ENCODE measurements at regions of chr6 and their contacts with region 1.

Region 1: DNA sequence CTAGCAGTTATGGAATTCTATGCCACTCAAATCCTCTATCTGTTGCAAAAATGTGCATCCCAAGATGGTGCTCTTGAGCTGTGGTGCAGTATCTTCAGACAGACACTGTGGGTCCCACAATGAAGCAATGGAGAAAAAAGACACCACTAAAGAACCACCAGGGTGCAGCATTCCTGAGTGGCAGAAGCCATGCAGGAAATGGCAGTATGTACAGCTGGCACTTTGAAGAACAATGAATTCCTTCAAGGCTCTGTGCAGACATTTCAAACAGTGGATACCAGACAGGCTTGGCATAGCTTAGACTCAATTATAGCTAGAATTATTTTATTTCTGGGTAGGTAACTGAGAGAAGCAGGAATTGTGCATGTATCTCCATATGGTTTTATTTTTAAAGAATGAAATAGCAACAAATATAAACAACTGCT is 24.0 kb upstream of the HDAC2 start:
- DNase-seq: peak in 1 of 2 experiments; percentile 51
- H3K4me3 ChIP-seq: no peak overlapping the region
- H3K27ac ChIP-seq: no peak overlapping the region
- H3K4me1 ChIP-seq: peaks cover 0 to 8% (median 5%) of the 10 kb centered on the region in 4 experiments; a peak in 5 of 7 replicates
- H3K27me3 ChIP-seq: no peaks in the 10 kb centered on the region
- CTCF ChIP-seq: peak; percentile 32 to 98 (median 88)
- EP300 ChIP-seq: no peak
- POLR2A ChIP-seq: no peak
- RAD21 ChIP-seq: peak; percentile 96 to 97

Region 2: DNA sequence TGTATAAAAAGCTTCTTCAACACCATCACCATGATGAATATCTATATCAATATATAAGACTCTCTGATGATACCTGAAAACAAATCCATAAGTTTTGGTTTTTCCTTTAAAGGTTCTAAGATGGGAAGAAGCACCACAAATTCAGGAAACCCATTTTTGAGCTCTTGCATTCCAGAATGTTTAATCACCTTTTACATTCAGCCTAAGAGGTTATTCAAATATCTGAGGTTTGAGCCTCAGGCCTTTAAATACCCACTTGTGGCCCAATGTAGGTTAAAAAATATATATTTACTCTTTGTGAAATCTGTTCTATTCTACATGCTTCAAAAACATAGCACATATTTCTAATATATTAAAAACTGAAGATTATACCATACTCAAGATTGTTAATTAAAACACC is 41.6 kb before region 1 on chr6:
- CTCF ChIA-PET with region 1: no interaction called
- POLR2A ChIA-PET with region 1: no interaction called
- DNase-seq: no peak
- H3K4me3 ChIP-seq: no peak overlapping the region
- H3K27ac ChIP-seq: no peak overlapping the region
- H3K4me1 ChIP-seq: no peaks in the 10 kb centered on the region
- H3K27me3 ChIP-seq: no peaks in the 10 kb centered on the region
- CTCF ChIP-seq: no peak
- EP300 ChIP-seq: no peak
- POLR2A ChIP-seq: no peak
- RAD21 ChIP-seq: no peak

Region 3: GRCh38 chr6:113980937-113981554 is 13.9 kb before region 1 on chr6:
- CTCF ChIA-PET with region 1: interaction called, 27 read pairs
- POLR2A ChIA-PET with region 1: no interaction called
- DNase-seq: no peak
- H3K4me3 ChIP-seq: no peak overlapping the region
- H3K27ac ChIP-seq: no peak overlapping the region
- H3K4me1 ChIP-seq: no peaks in the 10 kb centered on the region; a peak in 1 of 7 replicates
- H3K27me3 ChIP-seq: no peaks in the 10 kb centered on the region
- CTCF ChIP-seq: peak; percentile 76 to 87 (median 79)
- EP300 ChIP-seq: no peak
- POLR2A ChIP-seq: no peak
- RAD21 ChIP-seq: peak; percentile 89

Region 4: DNA sequence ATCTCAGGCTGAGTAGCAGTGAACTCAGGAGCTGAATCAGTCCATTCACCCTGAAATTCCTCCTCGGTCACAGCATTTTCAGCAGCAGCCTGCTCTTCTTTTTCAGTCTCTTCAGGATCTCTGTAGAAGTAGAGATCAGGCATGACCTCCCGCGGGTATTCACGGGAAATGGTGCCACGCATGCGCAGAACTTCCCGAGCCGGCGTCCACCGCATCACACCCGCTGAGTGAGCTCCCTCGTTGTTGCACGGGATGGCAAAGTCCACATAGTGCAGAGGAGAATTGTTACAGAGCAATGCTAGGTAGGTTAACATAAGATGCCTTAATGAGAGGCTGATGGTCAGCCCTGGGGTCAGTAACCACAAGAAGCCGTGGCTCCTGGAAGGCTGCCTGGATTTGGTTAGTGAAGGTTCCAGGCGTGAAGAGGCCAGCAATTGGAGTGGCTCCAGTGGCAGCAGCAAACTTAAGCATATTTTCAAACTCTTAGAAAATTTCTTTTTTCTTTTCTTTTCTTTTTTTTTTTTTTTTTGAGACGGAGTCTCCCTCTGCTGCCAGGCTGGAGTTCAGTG is 89.5 kb after region 1 on chr6:
- CTCF ChIA-PET with region 1: interaction called, 10 read pairs
- POLR2A ChIA-PET with region 1: no interaction called
- DNase-seq: no peak
- H3K4me3 ChIP-seq: no peak overlapping the region
- H3K27ac ChIP-seq: no peak overlapping the region
- H3K4me1 ChIP-seq: peaks cover 0 to 4% (median 1%) of the 10 kb centered on the region in 4 experiments; a peak in 1 of 7 replicates
- H3K27me3 ChIP-seq: no peaks in the 10 kb centered on the region
- CTCF ChIP-seq: no peak
- EP300 ChIP-seq: no peak
- POLR2A ChIP-seq: no peak
- RAD21 ChIP-seq: no peak

Region 5: GRCh38 chr6:114096561-114097172 is 101.7 kb after region 1 on chr6:
- CTCF ChIA-PET with region 1: interaction called, 18 read pairs
- POLR2A ChIA-PET with region 1: no interaction called
- DNase-seq: no peak
- H3K4me3 ChIP-seq: no peak overlapping the region
- H3K27ac ChIP-seq: no peak overlapping the region
- H3K4me1 ChIP-seq: no peaks in the 10 kb centered on the region
- H3K27me3 ChIP-seq: no peaks in the 10 kb centered on the region
- CTCF ChIP-seq: peak in 2 of 3 experiments; percentile 31 to 35; a peak in 2 of 4 replicates
- EP300 ChIP-seq: no peak
- POLR2A ChIP-seq: no peak
- RAD21 ChIP-seq: peak; percentile 55 to 57

Region 6: GRCh38 chr6:114342826-114343780 is 348.2 kb after region 1 on chr6 and contains the start of gene HS3ST5:
- CTCF ChIA-PET with region 1: interaction called, 13 read pairs
- POLR2A ChIA-PET with region 1: no interaction called
- DNase-seq: peak in 1 of 2 experiments; percentile 89
- H3K4me3 ChIP-seq: peak within 1 kb of the TSS; percentile 80 to 98 (median 82)
- H3K27ac ChIP-seq: peak within 1 kb of the TSS; percentile 56
- H3K4me1 ChIP-seq: peaks cover 0 to 15% (median 7%) of the 10 kb centered on the region in 4 experiments; a peak in 4 of 7 replicates
- H3K27me3 ChIP-seq: no peaks in the 10 kb centered on the region
- CTCF ChIP-seq: peak; percentile 76 to 84 (median 83)
- EP300 ChIP-seq: 0 out of 3 replicates have a peak, but pooled peaks of 1 of the 2 experiments have one; percentile 32
- POLR2A ChIP-seq: 0 out of 3 replicates have a peak, but pooled peaks of 1 of the 2 experiments have one; percentile 67
- RAD21 ChIP-seq: peak; percentile 88 to 90
- total RNA-seq, gene HS3ST5: 9.9 and 11.2 TPM in 2 replicates

Measured in H1 (cell line).